OCI-LY7 (cell line): ENCODE measurements at regions of chr7 and their contacts with region 1.

Region 1: GRCh38 chr7:87345166-87345927 is at the start of gene CROT:
- DNase-seq: peak; percentile 95
- H3K4me3 ChIP-seq: peak within 1 kb of the TSS; percentile 74
- H3K27ac ChIP-seq: peak within 1 kb of the TSS; percentile 57
- H3K4me1 ChIP-seq: peaks cover 30% of the 10 kb centered on the region
- CTCF ChIP-seq: no peak
- total RNA-seq, gene CROT: 3.0 and 5.2 TPM in 2 replicates

Region 2: GRCh38 chr7:86226191-86226590 is 1119.2 kb before region 1 on chr7:
- CTCF ChIA-PET with region 1: no interaction called
- POLR2A ChIA-PET with region 1: no interaction called
- intact Hi-C with region 1: no loop called
- DNase-seq: no peak
- H3K4me3 ChIP-seq: no peak overlapping the region
- H3K27ac ChIP-seq: no peak overlapping the region
- H3K4me1 ChIP-seq: no peaks in the 10 kb centered on the region
- CTCF ChIP-seq: no peak

Region 3: DNA sequence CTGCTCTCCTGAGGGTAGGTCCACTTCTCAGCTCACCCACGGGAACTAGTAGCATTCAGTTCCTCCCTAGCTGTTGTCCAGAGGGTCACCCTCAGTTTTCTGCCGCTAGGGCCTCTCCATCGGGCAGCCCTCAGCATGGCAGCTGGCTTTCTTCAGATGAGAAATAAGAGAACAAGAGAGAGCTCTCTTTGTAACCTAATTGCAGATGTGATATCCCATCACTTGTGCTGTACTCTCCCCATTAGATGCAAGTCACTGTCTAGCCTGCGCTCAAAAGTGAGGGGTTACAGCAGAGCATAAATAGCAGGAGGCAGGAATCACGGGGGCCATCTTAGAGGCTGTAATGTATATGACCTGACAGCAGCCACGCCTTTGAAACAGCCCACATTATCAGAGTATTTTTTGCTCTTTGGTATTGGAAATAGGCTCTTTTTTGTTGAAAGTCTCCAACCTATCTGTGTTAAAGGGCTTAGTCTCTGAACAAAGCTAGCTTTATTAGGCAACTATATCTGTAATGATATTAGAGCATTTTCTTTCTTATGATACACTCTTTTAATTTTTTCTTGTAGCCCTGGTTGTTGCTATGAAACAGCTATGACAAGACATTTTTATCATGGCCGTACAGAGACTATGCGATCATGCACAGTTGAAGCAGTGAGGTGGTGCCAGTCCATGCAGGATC is 45.8 kb after region 1 on chr7:
- CTCF ChIA-PET with region 1: no interaction called
- POLR2A ChIA-PET with region 1: no interaction called
- intact Hi-C with region 1: no loop called
- DNase-seq: no peak
- H3K4me3 ChIP-seq: no peak overlapping the region
- H3K27ac ChIP-seq: no peak overlapping the region
- H3K4me1 ChIP-seq: no peaks in the 10 kb centered on the region
- CTCF ChIP-seq: no peak

Region 4: GRCh38 chr7:87474533-87475358 is 129.4 kb after region 1 on chr7:
- CTCF ChIA-PET with region 1: no interaction called
- POLR2A ChIA-PET with region 1: no interaction called
- intact Hi-C with region 1: loop called (anchors 1 kb)
- DNase-seq: peak; percentile 82
- H3K4me3 ChIP-seq: peak overlapping the region; percentile 62
- H3K27ac ChIP-seq: peak overlapping the region; percentile 26
- H3K4me1 ChIP-seq: peaks cover 18% of the 10 kb centered on the region
- CTCF ChIP-seq: no peak

Region 5: GRCh38 chr7:87876040-87876868 is 530.9 kb after region 1 on chr7 and contains the starts of genes DBF4 and SLC25A40:
- CTCF ChIA-PET with region 1: no interaction called
- POLR2A ChIA-PET with region 1: no interaction called
- intact Hi-C with region 1: loop called (anchors 1 kb)
- DNase-seq: peak; percentile 96
- H3K4me3 ChIP-seq: peak within 1 kb of the TSS; percentile 94
- H3K27ac ChIP-seq: peak within 1 kb of the TSS; percentile 99
- H3K4me1 ChIP-seq: peaks cover 29% of the 10 kb centered on the region
- CTCF ChIP-seq: no peak
- total RNA-seq, gene DBF4: 83.9 and 99.2 TPM in 2 replicates
- total RNA-seq, gene SLC25A40: 21.0 and 22.0 TPM in 2 replicates